ENCODE measurements at regions of chr13 and their contacts with region 1.

Region 1: GRCh38 chr13:80313668-80314278 is 27.2 kb downstream of the SPRY2 start:
- DNase-seq: no peak
- H3K4me3 ChIP-seq: no peak overlapping the region
- H3K27ac ChIP-seq: no peak overlapping the region
- H3K4me1 ChIP-seq: peaks cover 26% of the 10 kb centered on the region
- H3K27me3 ChIP-seq: no peaks in the 10 kb centered on the region
- CTCF ChIP-seq: no peak

Region 2: GRCh38 chr13:79847882-79848592 is 465.7 kb before region 1 on chr13:
- CTCF ChIA-PET with region 1: no interaction called
- POLR2A ChIA-PET with region 1: interaction called, 11 read pairs
- intact Hi-C with region 1: no loop called
- DNase-seq: no peak
- H3K4me3 ChIP-seq: no peak overlapping the region
- H3K27ac ChIP-seq: no peak overlapping the region
- H3K4me1 ChIP-seq: no peaks in the 10 kb centered on the region
- H3K27me3 ChIP-seq: no peaks in the 10 kb centered on the region
- CTCF ChIP-seq: no peak

Region 3: DNA sequence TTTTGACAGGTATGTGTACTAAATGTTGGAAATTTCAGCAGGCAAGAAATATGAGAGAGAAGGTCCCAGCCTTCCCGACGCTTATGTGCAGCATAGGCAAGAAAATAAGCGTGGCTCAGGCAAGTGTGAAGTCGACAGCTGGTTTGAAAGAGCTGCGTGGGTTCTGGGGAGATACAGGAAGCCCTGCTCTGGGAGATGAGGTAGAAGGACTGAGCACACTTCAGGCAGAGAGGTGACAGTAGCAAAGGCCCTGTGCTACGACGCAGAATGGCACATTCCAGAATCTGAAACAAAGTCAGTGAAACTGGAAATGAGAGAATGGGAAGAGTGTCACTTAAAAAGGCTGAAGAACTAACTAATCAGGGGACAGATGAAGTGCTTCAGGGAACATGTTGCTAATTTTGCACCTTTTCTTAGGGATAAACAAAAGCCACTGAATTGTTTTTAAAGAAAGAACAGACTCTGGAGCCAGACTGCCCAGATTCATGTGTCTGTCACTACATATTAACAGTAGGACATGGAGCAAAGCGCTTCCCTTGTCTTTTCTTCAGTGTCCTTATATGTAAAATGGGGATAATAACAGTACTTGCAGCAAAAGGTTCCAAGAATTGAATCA is 132.9 kb before region 1 on chr13:
- CTCF ChIA-PET with region 1: no interaction called
- POLR2A ChIA-PET with region 1: no interaction called
- intact Hi-C with region 1: no loop called
- DNase-seq: no peak
- H3K4me3 ChIP-seq: no peak overlapping the region
- H3K27ac ChIP-seq: no peak overlapping the region
- H3K4me1 ChIP-seq: no peaks in the 10 kb centered on the region
- H3K27me3 ChIP-seq: no peaks in the 10 kb centered on the region
- CTCF ChIP-seq: no peak

Measured in A673 (cell line).